ENCODE measurements at regions of chrX and their contacts with region 1.

Region 1: GRCh38 chrX:120560842-120561633 is at the start of gene CUL4B:
- DNase-seq: peak; percentile 88 to 96 (median 92)
- H3K4me3 ChIP-seq: peak within 1 kb of the TSS; percentile 45 to 78 (median 65)
- H3K27ac ChIP-seq: peak within 1 kb of the TSS; percentile 58 to 99 (median 97)
- H3K27me3 ChIP-seq: peaks cover 0 to 29% (median 0%) of the 10 kb centered on the region in 45 donors
- CTCF ChIP-seq: no peak
- total RNA-seq, gene CUL4B: 35.2 to 60.7 (median 45.2) TPM

Region 2: GRCh38 chrX:120485638-120486520 is 75.2 kb before region 1 on chrX:
- intact Hi-C with region 1: loop called in 1 of 2 experiments (anchors 5 kb)
- DNase-seq: peak; percentile 62 to 94 (median 88)
- H3K4me3 ChIP-seq: peak overlapping the region in 58 of 59 donors; percentile 9 to 68 (median 49)
- H3K27ac ChIP-seq: peak overlapping the region; percentile 19 to 94 (median 86)
- H3K27me3 ChIP-seq: peaks cover 0 to 22% (median 0%) of the 10 kb centered on the region in 45 donors
- CTCF ChIP-seq: peak; percentile 17 to 73 (median 58)

Region 3: DNA sequence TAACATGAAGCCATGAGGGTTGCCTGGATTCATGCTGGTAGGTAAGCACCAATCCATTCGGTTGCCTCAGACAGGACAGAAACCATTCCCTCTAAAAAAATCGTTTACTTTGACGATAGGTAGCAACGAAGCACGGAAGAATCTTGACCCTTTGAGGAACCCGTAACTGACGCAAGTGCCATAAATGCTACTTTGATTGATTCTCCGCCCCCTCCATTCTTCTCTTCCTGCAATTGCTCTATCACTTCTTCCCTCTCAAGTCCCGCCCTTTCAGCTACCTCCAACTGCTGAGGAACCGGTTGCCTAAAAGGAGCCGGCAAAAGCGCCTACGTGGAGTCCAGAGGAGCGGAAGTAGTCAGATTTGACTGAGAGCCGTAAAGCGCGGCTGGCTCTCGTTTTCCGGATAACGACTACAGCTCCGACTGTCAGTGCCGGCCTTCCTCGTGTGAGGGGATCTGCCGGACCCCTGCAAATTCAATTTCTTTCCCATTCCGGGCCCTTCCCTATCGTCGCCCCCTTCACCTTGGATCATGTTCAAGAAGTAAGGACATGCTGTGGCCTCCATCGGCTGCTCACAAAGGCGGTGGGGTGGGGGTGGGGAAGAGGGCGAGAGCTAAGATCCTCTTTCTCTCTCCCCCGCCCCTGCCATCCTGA is 42.8 kb after region 1 on chrX and contains the start of gene MCTS1:
- intact Hi-C with region 1: loop called (anchors 1 to 2 kb)
- DNase-seq: peak; percentile 46 to 86 (median 74)
- H3K4me3 ChIP-seq: peak within 1 kb of the TSS; percentile 24 to 79 (median 65)
- H3K27ac ChIP-seq: peak within 1 kb of the TSS in 57 of 59 donors; percentile 2 to 89 (median 77)
- H3K27me3 ChIP-seq: peaks cover 0 to 15% (median 0%) of the 10 kb centered on the region in 45 donors
- CTCF ChIP-seq: peak in 1 of 56 donors; percentile 10
- total RNA-seq, gene MCTS1: 19.7 to 60.8 (median 38.3) TPM

Region 4: DNA sequence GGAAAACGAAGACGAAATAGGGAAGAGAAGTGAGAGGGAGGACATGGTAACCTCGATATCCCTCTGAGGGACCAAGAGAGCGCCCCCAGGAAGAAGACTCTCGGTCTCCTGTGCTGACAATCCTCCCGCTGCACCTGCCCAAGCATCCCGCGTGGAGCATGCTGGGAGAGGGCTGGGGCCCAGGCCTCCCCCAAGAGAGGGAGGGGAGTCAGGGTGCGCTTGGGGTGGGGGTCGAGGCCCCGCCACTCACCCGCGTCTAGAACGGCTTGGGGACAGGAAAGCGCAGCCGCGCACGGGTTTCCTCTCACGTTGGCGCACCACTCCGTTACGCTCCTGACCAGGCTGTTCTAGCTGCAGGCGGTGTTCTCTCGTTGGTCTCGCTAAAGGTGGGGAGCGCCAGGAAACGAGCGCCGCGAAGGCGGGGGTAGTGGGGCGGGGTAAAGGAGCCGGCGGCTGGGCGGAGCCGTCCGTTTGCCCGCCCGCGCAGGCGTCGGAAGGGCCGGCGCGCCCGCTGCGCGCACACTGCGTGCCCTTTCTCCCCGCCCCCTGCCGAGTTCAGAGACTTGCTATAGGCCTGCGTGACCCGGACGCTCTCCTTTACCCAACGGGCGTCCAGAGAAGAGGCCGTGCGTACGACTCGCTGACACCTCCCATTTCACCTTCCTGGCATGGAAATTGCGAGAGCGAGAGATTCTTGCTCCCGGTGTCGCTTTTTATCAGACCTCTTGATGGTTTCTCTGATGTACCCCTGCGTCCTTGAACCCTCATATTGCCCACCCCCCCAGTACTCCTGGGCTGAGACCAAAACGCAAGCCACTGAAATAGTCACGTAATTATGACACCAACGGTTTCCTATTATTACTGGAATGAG is 68.9 kb after region 1 on chrX and contains the start of gene C1GALT1C1:
- intact Hi-C with region 1: loop called (anchors 2 kb)
- DNase-seq: peak; percentile 70 to 91 (median 88)
- H3K4me3 ChIP-seq: peak within 1 kb of the TSS; percentile 43 to 82 (median 67)
- H3K27ac ChIP-seq: peak within 1 kb of the TSS; percentile 44 to 92 (median 83)
- H3K27me3 ChIP-seq: peaks cover 0 to 15% (median 0%) of the 10 kb centered on the region in 45 donors
- CTCF ChIP-seq: peak in 12 of 56 donors; percentile 4 to 27 (median 12)
- total RNA-seq, gene C1GALT1C1: 7.9 to 15.8 (median 11.7) TPM

Measured in dorsolateral prefrontal cortex (tissue), 120 donors.